ENCODE measurements at regions of chr15 and their contacts with region 1.

Region 1: DNA sequence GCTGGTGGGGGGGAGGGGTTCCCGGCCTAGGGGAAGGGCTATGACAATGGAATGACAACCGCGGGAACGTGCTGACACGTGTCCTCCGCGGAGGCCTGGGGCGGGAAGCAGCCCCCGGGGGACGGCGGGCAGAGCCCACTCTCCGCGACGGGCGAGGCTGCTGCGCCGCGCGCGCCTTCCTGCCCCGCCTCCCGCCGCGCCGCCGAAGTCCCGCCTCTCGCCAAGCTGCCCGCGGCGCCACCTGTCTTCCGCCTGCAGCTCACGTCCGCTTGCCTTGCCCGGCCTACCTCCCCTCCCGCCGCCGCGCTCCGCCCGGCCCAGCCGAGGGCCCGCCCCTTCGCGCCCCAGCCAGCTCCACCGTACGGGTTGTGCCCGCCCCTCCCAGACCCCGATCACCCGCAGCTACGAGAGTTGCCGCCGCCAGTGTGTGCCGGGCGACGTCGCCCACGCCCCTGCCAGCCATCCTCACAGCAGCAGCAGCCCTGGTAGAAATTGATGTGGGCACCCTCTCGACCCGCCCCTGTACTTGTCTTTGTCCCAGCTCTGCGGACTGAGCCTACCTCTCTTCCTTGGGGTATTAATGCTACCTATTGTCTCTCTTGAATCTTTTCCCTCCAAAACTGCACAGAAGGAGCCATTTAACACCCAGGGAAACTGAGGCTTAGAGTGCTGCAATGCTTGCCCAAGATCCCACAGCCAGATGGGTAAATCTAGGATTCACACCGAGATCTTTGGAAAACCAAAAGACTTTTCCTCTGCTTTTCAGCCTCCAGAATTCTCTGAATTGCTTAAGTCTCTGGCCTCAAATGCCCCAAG is at the start of gene PARP16:
- DNase-seq: peak; percentile 95
- ATAC-seq: peak; percentile 97
- H3K4me3 Mint-ChIP-seq: peak within 1 kb of the TSS; percentile 81
- H3K27ac Mint-ChIP-seq: peak within 1 kb of the TSS; percentile 86
- H3K4me1 Mint-ChIP-seq: peaks cover 25% of the 10 kb centered on the region
- H3K27me3 Mint-ChIP-seq: no peaks in the 10 kb centered on the region
- total RNA-seq, gene PARP16: 11.7 to 19.7 TPM

Region 2: GRCh38 chr15:65184868-65185738 is 101.8 kb before region 1 on chr15 and contains the start of gene CLPX:
- CTCF ChIA-PET with region 1: interaction called, 12 read pairs
- DNase-seq: peak; percentile 93
- ATAC-seq: peak; percentile 93
- H3K4me3 Mint-ChIP-seq: peak within 1 kb of the TSS; percentile 93
- H3K27ac Mint-ChIP-seq: peak within 1 kb of the TSS; percentile 88
- H3K4me1 Mint-ChIP-seq: peaks cover 23% of the 10 kb centered on the region
- H3K27me3 Mint-ChIP-seq: no peaks in the 10 kb centered on the region
- total RNA-seq, gene CLPX: 46.8 to 58.8 TPM

Region 3: DNA sequence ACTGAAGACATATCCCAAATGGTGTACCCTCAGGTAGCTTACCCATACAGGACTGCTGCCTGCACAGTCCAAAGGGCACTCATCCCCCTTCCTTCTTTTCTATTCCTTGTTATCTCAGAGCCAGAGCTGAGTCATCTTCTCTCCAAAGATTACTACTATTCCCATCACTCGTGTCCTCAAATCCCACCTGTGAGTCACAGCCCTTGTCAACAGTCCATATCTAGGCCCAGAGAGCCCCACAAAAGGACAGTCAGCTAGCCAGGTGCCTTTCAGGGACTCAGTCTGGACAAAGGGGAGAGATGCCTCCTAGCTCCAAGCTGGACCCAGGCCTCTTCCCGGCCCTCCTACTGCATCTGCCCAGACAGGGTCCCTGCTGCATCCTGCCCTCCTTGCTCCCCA is 11.2 kb before region 1 on chr15:
- CTCF ChIA-PET with region 1: interaction called, 13 read pairs
- DNase-seq: no peak
- ATAC-seq: no peak
- H3K4me3 Mint-ChIP-seq: no peak overlapping the region
- H3K27ac Mint-ChIP-seq: no peak overlapping the region
- H3K4me1 Mint-ChIP-seq: peaks cover 12% of the 10 kb centered on the region
- H3K27me3 Mint-ChIP-seq: no peaks in the 10 kb centered on the region

Region 4: DNA sequence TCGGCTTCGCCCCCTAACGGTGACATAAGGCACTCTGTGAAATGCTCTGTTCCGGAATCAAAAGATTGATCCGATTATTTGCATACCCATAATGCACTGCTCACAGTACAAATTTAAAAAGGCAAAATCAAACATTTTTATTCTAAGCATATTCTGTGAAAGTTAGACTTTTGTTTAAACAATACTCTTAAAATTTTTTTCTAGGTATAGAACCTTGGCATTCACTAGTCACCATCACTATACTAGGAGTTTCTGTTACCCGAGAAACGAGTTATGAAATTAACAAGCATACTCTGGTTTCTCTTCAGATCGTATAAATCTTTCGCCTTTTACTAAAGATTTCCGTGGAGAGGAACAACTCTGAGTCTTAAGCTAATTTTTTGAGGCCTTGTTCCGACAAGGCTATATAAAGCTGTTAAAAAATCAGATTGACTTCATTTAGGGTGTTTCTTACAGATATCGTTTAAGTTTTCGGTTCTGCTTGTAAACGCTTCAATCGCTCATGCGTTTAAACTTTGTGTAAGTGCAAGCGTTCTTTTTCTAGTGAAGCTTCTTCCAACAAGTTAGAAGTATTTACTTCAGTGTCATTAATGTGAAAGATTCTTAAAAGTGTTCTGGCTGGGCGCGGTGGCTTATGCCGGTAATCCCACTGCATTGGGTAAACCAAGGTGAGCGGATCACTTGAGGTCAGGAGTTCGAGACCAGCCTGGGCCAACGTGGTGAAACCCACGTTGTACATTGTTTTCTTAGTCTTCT is 17.7 kb after region 1 on chr15 and contains the start of gene RNU5B-1:
- CTCF ChIA-PET with region 1: interaction called, 18 read pairs
- DNase-seq: peak; percentile 90
- ATAC-seq: peak; percentile 74
- H3K4me3 Mint-ChIP-seq: peak within 1 kb of the TSS; percentile 87
- H3K27ac Mint-ChIP-seq: peak within 1 kb of the TSS; percentile 97
- H3K4me1 Mint-ChIP-seq: peaks cover 36% of the 10 kb centered on the region
- H3K27me3 Mint-ChIP-seq: peaks cover 6% of the 10 kb centered on the region
- total RNA-seq, gene RNU5B-1: 15.8 TPM in 1 of 2 experiments, not detected in the other